ENCODE measurements at regions of chr7 and their contacts with region 1.

Region 1: DNA sequence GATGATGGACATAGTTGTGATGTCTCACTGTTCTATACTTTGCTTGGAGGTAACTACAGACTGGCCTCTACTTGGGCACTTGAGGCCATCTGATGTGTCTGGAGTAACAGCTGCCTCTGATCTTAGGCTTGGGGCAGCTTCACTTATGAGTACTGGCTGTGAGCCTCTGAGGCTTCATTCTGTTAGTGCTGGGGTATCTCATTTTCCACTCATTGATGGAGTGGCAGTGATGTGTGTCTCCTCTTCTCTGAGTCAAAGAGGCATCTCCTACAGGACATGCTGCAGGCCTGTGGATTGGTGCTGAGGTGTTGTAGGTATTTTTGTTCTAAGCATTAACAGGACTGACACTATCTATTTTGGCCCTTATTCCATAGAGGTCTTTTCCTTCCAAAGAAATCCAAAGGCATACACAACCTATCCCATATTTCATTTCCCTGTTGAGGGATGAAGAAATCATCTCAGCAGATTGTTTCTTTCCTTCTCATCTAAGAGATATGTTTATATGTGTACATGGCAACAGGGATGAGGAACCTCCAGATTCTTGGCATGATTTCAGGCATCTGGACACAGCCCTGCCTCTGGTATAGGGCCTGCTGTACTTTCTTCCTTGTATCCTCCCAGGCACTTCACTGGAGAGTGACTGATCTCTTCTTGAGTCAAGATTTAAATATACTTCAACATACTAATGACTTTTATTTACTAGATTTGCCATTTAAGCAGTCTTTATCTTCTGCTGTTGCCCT is 65.7 kb upstream of the NOBOX start:
- DNase-seq: peak in 1 of 2 experiments; percentile 39
- H3K4me3 ChIP-seq: no peak overlapping the region
- H3K27ac ChIP-seq: no peak overlapping the region
- H3K4me1 ChIP-seq: no peaks in the 10 kb centered on the region
- H3K27me3 ChIP-seq: no peaks in the 10 kb centered on the region
- CTCF ChIP-seq: no peak

Region 2: GRCh38 chr7:144534196-144534595 is 65.0 kb after region 1 on chr7:
- CTCF ChIA-PET with region 1: no interaction called
- POLR2A ChIA-PET with region 1: no interaction called
- intact Hi-C with region 1: loop called (anchors 2 kb)
- DNase-seq: no peak
- H3K4me3 ChIP-seq: no peak overlapping the region
- H3K27ac ChIP-seq: no peak overlapping the region
- H3K4me1 ChIP-seq: no peaks in the 10 kb centered on the region
- H3K27me3 ChIP-seq: no peaks in the 10 kb centered on the region
- CTCF ChIP-seq: no peak

Region 3: GRCh38 chr7:144805627-144806239 is 336.6 kb after region 1 on chr7:
- CTCF ChIA-PET with region 1: no interaction called
- POLR2A ChIA-PET with region 1: no interaction called
- intact Hi-C with region 1: no loop called
- DNase-seq: no peak
- H3K4me3 ChIP-seq: no peak overlapping the region
- H3K27ac ChIP-seq: no peak overlapping the region
- H3K4me1 ChIP-seq: no peaks in the 10 kb centered on the region
- H3K27me3 ChIP-seq: no peaks in the 10 kb centered on the region
- CTCF ChIP-seq: no peak